BJ (cell line): ENCODE measurements at regions of chr11 and their contacts with region 1.

Region 1: DNA sequence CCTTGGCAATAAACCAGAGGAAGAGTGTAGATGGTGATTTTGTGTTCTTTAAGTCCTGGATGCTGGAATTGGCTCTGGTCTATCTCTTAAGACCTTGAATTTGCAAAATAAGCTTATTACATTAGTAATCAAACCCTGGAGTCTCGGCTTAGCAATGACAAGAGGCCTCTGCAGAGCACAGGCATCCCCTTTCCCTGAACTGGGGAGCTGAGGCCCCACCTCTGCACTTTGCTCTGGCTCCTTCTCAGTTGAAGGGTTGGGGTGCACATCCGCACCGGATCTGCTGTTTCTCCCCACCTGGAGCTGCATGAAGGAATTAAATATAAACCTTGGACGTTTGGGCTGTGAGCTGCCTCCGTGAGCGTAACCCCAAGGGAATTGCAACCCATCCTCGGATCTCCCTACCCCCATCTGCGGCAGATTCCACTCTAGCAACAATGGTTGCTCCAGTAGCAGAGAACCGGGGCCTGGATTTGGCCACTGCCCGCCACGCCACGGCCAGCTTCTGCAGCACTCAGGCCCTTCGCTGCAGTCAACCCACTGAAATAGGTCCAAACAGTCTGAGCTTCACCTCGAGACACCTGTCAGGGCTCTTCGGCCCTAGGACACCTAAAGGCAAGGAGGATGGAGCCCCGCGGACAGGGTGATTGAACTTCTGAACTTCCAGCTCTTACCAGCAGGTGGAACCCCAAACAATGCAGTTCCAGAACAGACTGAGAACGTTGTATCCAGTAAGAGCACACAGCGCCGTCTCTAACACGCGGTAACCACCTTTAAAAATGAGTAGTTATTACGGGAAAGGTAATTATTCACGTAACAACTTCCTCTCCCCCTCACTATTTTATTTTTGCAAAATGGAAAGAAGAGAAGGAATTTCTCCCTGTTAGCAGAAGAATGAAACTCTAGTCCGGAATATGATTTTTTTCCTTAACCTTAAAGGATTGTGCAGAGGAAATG is 54.8 kb upstream of the CAPRIN1 start:
- DNase-seq: no peak
- H3K4me3 ChIP-seq: no peak overlapping the region
- H3K27me3 ChIP-seq: no peaks in the 10 kb centered on the region
- CTCF ChIP-seq: peak; percentile 83

Region 2: GRCh38 chr11:33753304-33753967 is 243.3 kb before region 1 on chr11:
- CTCF ChIA-PET with region 1: no interaction called
- POLR2A ChIA-PET with region 1: no interaction called
- DNase-seq: no peak
- H3K4me3 ChIP-seq: no peak overlapping the region
- H3K27me3 ChIP-seq: no peaks in the 10 kb centered on the region
- CTCF ChIP-seq: no peak

Region 3: DNA sequence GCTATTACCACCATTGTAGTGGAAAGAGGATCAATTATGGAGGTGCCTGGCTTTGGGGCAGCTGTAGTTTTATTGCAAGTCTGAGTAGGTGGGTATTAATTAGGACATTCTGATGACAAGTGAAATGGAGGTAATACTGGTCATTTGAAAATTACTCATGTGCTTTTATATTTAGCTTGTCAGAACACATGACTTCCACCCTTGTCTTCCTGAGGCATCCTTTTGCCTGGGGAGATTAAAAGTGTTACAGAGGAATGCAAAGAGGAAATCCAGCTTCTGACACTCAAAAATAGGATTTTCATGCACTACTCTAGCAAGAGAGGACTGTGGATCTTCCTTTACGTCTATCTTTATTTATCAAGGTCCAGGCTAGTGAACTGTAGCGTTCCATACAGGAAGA is 10.1 kb after region 1 on chr11:
- CTCF ChIA-PET with region 1: interaction called, 27 read pairs
- POLR2A ChIA-PET with region 1: no interaction called
- DNase-seq: no peak
- H3K4me3 ChIP-seq: no peak overlapping the region
- H3K27me3 ChIP-seq: peaks cover 7% of the 10 kb centered on the region
- CTCF ChIP-seq: no peak

Region 4: GRCh38 chr11:34165518-34166277 is 168.9 kb after region 1 on chr11:
- CTCF ChIA-PET with region 1: interaction called, 14 read pairs
- POLR2A ChIA-PET with region 1: no interaction called
- DNase-seq: no peak
- H3K4me3 ChIP-seq: no peak overlapping the region
- H3K27me3 ChIP-seq: no peaks in the 10 kb centered on the region
- CTCF ChIP-seq: no peak

Region 5: DNA sequence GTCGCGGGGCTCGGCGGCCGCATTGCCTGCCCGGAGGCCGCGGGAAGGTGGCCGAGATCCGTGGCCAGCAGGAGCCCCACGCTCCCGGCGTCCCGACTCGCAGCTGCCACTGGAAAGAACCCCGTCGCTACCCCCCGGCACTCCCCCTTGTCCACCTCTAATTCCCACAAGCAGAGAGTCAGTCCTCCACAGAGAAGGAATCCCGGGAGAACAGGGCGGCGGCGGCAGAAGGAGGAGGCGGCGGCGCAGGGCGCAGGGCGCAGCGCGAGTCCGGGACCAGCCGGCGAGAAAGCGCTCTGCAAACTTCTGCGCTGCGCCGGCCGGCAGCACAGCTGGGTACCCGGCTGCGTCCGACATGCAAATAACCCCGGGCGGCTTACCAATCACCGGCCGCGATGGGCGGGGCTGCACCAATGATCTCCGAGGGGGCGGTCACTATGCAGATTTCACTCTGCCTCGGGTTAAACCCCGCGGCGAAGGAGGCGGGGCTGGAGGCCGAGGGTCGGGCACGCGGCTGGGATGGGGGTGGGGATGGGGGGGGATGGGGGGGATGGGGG is 361.0 kb after region 1 on chr11 and contains the start of gene ABTB2:
- CTCF ChIA-PET with region 1: interaction called, 10 read pairs
- POLR2A ChIA-PET with region 1: no interaction called
- DNase-seq: peak; percentile 77
- H3K4me3 ChIP-seq: peak within 1 kb of the TSS; percentile 61
- H3K27me3 ChIP-seq: no peaks in the 10 kb centered on the region; the same call in 1 of the 2 replicates
- CTCF ChIP-seq: no peak
- polyA plus RNA-seq, gene ABTB2: 2.8 and 6.3 TPM in 2 replicates